ENCODE measurements at regions of chr12 and their contacts with region 1.

Region 1: GRCh38 chr12:84874125-84874824 is 38.3 kb downstream of the SLC6A15 start:
- DNase-seq: peak; percentile 38
- ATAC-seq: peak; percentile 86
- H3K4me3 ChIP-seq: no peak overlapping the region
- H3K27ac ChIP-seq: no peak overlapping the region
- H3K4me1 ChIP-seq: no peaks in the 10 kb centered on the region
- H3K27me3 ChIP-seq: no peaks in the 10 kb centered on the region
- CTCF ChIP-seq: peak; percentile 74
- EP300 ChIP-seq: no peak
- POLR2A ChIP-seq: no peak
- RAD21 ChIP-seq: peak; percentile 39; the same call in 1 of the 2 replicates

Region 2: DNA sequence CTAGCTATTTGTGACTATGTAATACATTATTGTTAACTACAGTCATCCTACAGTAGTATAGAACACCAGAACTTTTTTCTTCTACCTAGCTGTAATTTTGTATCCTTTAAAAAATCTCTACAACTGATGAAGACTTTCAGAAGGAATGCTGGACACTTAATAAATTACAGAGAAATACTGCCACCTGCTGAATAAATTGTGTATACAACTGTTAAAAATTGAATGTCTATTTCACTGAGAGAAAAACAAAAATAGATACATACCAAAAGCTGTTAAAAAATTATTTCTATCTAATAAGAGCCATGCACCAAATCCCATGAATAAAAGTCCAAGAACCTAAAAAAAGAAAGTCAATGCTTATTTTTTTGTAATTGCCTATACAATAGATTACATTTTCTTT is 155.2 kb after region 1 on chr12:
- CTCF ChIA-PET with region 1: interaction called, 52 read pairs
- POLR2A ChIA-PET with region 1: no interaction called
- in situ Hi-C with region 1: loop called (anchors 5 kb)
- intact Hi-C with region 1: loop called (anchors 1 kb)
- DNase-seq: peak; percentile 3
- ATAC-seq: no peak
- H3K4me3 ChIP-seq: no peak overlapping the region
- H3K27ac ChIP-seq: no peak overlapping the region
- H3K4me1 ChIP-seq: no peaks in the 10 kb centered on the region
- H3K27me3 ChIP-seq: no peaks in the 10 kb centered on the region
- CTCF ChIP-seq: peak; percentile 31
- EP300 ChIP-seq: no peak
- POLR2A ChIP-seq: no peak
- RAD21 ChIP-seq: no peak

Region 3: DNA sequence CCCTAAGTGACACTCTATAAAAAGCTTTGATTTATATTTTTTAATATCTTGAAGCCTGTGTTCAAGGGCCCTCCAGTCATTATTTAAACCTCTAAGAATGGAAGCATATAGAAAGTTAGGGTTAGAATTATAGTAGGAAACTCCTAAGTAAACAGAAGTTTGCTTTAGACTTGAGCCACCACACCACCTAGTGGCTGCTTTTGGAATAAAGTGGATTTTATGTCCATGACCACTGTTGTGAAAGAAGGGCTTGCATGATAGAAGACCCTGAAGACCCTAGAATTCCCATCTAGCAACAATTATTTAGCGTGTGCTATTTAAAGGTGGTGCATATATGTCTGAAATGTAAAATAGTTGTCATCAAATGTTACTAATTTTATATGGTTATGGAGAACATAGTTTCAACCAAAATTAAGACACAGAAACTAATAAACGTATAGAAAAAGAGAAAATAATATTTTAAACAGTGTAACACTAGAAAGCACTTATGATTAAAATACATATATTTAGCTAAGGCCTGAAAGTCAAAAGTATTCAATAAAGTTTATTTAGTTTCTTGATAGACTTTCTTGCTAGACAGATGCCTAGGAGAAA is 183.2 kb after region 1 on chr12:
- CTCF ChIA-PET with region 1: interaction called, 21 read pairs
- POLR2A ChIA-PET with region 1: no interaction called
- in situ Hi-C with region 1: no loop called
- intact Hi-C with region 1: loop called (anchors 1 kb)
- DNase-seq: peak; percentile 30
- ATAC-seq: peak; percentile 59; the same call in 2 of the 3 replicates
- H3K4me3 ChIP-seq: no peak overlapping the region
- H3K27ac ChIP-seq: no peak overlapping the region
- H3K4me1 ChIP-seq: no peaks in the 10 kb centered on the region
- H3K27me3 ChIP-seq: no peaks in the 10 kb centered on the region
- CTCF ChIP-seq: peak; percentile 64
- EP300 ChIP-seq: no peak
- POLR2A ChIP-seq: no peak
- RAD21 ChIP-seq: no peak

Measured in HepG2 (cell line).